ENCODE measurements at regions of chr7 and their contacts with region 1.

Region 1: GRCh38 chr7:77415823-77416622 is at the start of gene GSAP:
- DNase-seq: peak; percentile 69
- ATAC-seq: peak; percentile 67
- H3K4me3 Mint-ChIP-seq: peak within 1 kb of the TSS; percentile 85
- H3K27ac Mint-ChIP-seq: peak within 1 kb of the TSS; percentile 94
- H3K4me1 Mint-ChIP-seq: peaks cover 68% of the 10 kb centered on the region
- H3K27me3 Mint-ChIP-seq: no peaks in the 10 kb centered on the region
- CTCF ChIP-seq: no peak
- total RNA-seq, gene GSAP: 73.9 and 91.2 TPM in 2 replicates

Region 2: DNA sequence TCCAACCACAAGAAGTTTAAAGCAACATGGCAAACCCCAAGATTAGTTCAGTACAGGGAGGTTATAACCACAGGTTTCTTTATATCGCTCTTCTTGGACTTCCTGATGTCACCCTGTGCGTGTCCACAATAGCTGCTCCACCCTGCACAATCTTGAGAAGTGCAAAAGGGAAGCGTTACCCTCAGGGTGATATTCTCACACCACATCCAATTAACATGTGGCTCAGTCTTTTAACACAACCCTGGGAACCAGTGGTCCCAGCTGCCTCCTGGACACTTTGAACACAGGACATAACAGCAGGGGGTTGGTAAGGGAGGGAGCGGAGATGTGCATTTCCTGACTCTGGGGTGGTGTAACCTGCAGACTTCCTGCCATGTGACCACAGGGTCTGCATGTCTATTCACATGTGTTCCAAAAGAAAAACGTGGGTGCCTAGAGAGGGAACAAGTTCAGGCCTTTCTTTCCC is 64.5 kb before region 1 on chr7:
- CTCF ChIA-PET with region 1: no interaction called
- POLR2A ChIA-PET with region 1: interaction called, 17 read pairs
- intact Hi-C with region 1: no loop called
- DNase-seq: peak; percentile 29
- ATAC-seq: peak; percentile 88
- H3K4me3 Mint-ChIP-seq: peak overlapping the region; percentile 75
- H3K27ac Mint-ChIP-seq: peak overlapping the region; percentile 96
- H3K4me1 Mint-ChIP-seq: peaks cover 41% of the 10 kb centered on the region
- H3K27me3 Mint-ChIP-seq: no peaks in the 10 kb centered on the region
- CTCF ChIP-seq: no peak

Region 3: GRCh38 chr7:77383333-77383740 is 32.7 kb before region 1 on chr7:
- CTCF ChIA-PET with region 1: no interaction called
- POLR2A ChIA-PET with region 1: interaction called, 10 read pairs
- intact Hi-C with region 1: loop called (anchors 5 kb)
- DNase-seq: no peak
- ATAC-seq: no peak
- H3K4me3 Mint-ChIP-seq: no peak overlapping the region
- H3K27ac Mint-ChIP-seq: no peak overlapping the region
- H3K4me1 Mint-ChIP-seq: peaks cover 15% of the 10 kb centered on the region
- H3K27me3 Mint-ChIP-seq: no peaks in the 10 kb centered on the region
- CTCF ChIP-seq: no peak

Region 4: DNA sequence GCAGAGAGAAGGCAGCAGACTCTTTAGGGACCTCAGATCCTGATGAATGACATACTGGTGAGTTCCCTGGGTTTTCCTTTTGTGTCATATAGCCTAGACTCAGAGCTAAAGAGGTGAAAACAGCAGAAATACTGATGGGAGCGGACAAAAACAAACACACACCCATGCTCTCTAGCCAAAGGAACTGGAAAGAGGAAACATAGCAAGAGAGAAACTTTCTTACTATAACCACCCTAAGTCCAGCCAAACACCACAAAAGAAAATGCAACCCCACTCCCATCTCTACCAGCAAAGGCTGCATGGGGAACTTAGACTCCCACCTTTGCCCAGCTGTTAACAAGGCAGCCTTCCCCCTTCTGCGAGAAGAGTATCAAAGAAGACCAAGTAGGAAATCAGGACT is 16.2 kb before region 1 on chr7:
- CTCF ChIA-PET with region 1: interaction called, 5 read pairs
- POLR2A ChIA-PET with region 1: interaction called, 38 read pairs
- intact Hi-C with region 1: loop called (anchors 2 kb)
- DNase-seq: no peak
- ATAC-seq: no peak
- H3K4me3 Mint-ChIP-seq: peak overlapping the region; percentile 8
- H3K27ac Mint-ChIP-seq: peak overlapping the region; percentile 70
- H3K4me1 Mint-ChIP-seq: peaks cover 51% of the 10 kb centered on the region
- H3K27me3 Mint-ChIP-seq: no peaks in the 10 kb centered on the region
- CTCF ChIP-seq: no peak

Region 5: DNA sequence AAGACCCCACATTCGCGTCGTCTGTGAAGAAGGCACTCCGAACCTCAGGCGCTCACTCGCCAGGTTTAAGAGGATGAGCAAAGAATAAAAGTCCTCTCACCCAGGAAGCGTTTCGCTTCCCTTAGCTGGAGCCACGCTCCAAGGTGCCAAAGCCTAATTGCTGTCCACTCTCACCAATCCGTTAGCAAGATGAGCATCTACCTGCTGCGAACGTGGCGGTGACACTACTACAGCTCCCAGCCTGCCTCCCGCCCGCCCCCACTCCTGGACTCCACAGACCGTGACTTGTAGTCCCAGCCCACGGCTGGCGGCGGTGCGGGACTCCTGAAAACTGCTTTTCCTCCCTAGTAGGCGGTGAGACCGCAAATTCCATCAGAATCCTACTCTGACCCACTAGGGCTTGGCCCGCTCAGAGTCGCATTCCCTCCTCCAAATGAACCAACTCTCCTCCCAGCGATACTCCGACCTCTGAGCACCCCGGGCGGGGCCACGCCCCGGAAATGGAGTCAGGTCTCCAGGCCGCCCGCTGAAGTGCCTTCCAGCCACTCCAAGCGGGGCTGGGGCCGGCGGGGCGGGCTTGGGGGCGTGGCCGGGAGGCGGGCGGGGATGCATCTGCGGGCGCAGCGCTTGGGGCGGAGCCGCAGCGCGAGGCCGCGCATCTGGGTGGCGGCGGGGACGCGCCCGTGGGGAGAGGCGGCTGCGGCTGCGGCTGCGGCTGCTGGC is 120.6 kb after region 1 on chr7:
- CTCF ChIA-PET with region 1: no interaction called
- POLR2A ChIA-PET with region 1: interaction called, 70 read pairs
- intact Hi-C with region 1: loop called (anchors 1 kb)
- DNase-seq: peak; percentile 96
- ATAC-seq: peak; percentile 88
- H3K4me3 Mint-ChIP-seq: peak overlapping the region; percentile 98
- H3K27ac Mint-ChIP-seq: peak overlapping the region; percentile 94
- H3K4me1 Mint-ChIP-seq: peaks cover 33% of the 10 kb centered on the region
- H3K27me3 Mint-ChIP-seq: no peaks in the 10 kb centered on the region
- CTCF ChIP-seq: no peak

Region 6: DNA sequence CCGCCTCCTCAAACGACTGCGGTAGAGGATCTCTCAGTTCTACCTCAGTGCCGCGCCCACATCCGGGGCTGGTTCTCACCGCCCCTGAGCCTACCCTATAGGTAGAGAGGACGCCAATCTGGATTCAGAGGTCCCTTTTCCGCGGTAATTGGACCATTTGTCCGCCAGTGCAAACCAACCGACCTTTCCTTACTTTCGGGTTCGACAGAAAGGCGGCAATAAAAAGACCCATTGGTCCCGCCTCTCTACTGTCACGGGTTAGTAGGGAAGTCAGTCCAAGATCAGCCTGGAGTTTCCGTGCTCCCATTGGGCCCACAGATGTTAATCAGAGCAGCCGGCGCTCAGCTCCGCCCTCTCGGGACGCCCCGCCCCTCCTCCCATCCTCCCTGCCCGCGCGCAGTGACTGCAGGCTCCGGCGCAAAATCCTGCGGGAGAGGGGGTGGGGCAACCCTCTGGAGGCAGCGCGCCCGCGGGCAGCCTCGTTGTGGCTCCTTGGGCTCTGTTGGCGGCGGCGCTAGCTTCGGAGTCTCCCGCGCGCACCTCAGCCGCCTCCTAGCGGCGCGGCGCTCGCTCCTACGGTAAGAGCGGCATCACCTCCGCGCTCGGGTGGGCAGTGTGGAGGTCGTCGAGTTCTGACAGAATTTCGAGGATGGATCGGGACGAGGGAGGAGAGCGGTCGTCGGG is 382.5 kb after region 1 on chr7 and contains the starts of genes PHTF2 and TMEM60:
- CTCF ChIA-PET with region 1: no interaction called
- POLR2A ChIA-PET with region 1: interaction called, 4 read pairs
- intact Hi-C with region 1: loop called (anchors 2 kb)
- DNase-seq: peak; percentile 85
- ATAC-seq: peak; percentile 88
- H3K4me3 Mint-ChIP-seq: peak within 1 kb of the TSS; percentile 98
- H3K27ac Mint-ChIP-seq: peak within 1 kb of the TSS; percentile 91
- H3K4me1 Mint-ChIP-seq: peaks cover 82% of the 10 kb centered on the region
- H3K27me3 Mint-ChIP-seq: no peaks in the 10 kb centered on the region
- CTCF ChIP-seq: no peak
- total RNA-seq, gene PHTF2: 31.4 and 38.9 TPM in 2 replicates
- total RNA-seq, gene TMEM60: 15.3 and 16.3 TPM in 2 replicates